HEK293T (cell line): ENCODE measurements at regions of chr2 and their contacts with region 1.

Region 1: DNA sequence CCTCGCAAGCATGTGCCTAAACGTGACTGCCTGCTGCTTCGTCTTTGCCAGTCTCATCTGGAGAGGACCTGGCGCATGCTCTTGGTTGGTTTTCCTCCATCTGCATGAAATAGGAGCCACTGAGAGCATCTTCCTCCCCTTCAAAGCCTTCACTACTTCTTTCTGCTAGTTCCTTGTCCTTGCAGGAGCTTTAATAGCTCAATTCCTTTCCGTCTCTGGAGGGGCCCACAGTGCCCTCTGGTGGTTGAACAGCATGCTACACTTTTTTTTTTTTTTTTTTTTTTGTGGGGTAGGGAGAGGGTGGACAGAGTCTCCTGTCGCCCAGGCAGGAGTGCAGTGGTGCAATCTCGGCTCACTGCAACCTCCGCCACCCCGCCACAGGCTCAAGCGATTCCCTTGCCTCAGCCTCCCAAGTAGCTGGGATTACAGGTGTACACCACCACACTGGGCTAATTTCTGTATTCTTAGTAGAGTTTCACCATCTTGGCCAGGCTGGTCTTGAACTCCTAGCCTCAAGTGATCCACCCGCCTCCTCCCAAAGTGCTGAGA is 59.6 kb downstream of the SP110 start:
- DNase-seq: peak; percentile 66

Region 2: GRCh38 chr2:229653531-229653930 is 506.7 kb before region 1 on chr2:
- CTCF ChIA-PET with region 1: interaction called, 10 read pairs
- POLR2A ChIA-PET with region 1: no interaction called
- DNase-seq: no peak

Region 3: DNA sequence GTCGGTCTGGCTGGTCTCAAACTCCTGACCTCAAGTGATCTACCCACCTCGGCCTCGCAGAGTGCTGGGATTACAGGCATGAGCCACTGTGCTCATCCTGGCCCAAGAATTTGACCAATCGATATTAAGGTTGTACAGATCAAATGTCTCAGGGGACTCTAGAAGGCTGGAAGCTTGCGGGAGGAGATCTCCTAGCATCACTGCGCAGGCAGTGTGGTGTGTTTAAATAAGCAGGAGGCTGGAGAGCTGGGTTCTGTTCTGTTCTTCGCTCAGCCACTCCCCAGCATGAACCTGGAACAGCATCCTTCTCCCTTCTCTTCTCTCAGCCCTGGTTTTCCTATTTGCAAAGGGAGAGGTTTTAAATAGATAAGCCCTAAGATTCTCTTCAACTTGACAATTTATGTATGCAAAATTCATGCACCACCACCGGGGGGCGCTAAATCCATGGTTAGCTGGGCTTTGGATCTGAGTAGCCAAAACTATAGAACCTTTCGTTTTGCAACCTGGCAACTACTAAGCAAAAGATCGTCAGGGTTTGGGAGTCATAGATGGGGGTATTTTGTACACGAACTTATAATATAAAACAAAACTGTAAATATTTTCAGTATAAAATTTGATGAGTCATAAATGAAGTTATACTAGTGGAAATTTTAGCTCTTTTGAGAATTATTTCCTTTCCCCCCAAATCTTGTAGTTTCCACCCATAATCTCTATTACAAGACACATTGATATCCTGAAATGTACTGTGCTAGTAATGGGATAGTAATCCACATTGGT is 152.1 kb before region 1 on chr2:
- CTCF ChIA-PET with region 1: interaction called, 10 read pairs
- POLR2A ChIA-PET with region 1: no interaction called
- DNase-seq: peak; percentile 58